CD4-positive, alpha-beta T cell (primary cell): ENCODE measurements at regions of chr18 and their contacts with region 1.

Region 1: DNA sequence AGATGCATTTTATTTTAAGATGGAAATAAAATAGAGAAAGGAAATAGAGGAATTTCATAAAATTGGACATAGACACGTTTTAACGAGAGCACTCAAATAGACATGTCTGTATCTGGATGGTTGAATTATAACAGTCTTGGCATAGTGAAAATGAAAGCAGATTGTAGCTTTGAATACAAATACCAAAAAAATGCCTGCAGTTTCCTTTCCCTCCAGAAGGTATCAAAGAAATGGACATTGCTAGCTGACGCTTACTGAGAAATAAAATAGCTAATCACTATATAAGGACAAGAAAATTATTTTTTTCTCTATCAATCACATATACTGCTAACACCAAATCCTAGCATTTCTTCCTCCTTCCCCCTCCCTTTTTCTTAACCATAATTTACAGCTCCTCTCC is 11.4 kb upstream of the MAPRE2 start:
- DNase-seq: peak in 3 of 14 experiments; percentile 65 to 80 (median 66)
- ATAC-seq: peak; percentile 39
- H3K4me3 ChIP-seq: peak overlapping the region; percentile 51
- H3K4me3 Mint-ChIP-seq: peak overlapping the region; percentile 82
- H3K27ac ChIP-seq: peak overlapping the region; percentile 80 to 89
- H3K27ac Mint-ChIP-seq: peak overlapping the region; percentile 98
- H3K4me1 ChIP-seq: peaks cover 34% of the 10 kb centered on the region
- H3K4me1 Mint-ChIP-seq: peaks cover 70% of the 10 kb centered on the region
- H3K27me3 ChIP-seq: no peaks in the 10 kb centered on the region
- H3K27me3 Mint-ChIP-seq: no peaks in the 10 kb centered on the region
- CTCF ChIP-seq: peak; percentile 16

Region 2: GRCh38 chr18:34976899-34977837 is 52.6 kb before region 1 on chr18:
- CTCF ChIA-PET with region 1: no interaction called
- POLR2A ChIA-PET with region 1: interaction called, 10 read pairs
- intact Hi-C with region 1: no loop called
- DNase-seq: peak; percentile 49 to 87 (median 75)
- ATAC-seq: peak; percentile 74
- H3K4me3 ChIP-seq: peak overlapping the region; percentile 97
- H3K4me3 Mint-ChIP-seq: peak overlapping the region; percentile 95
- H3K27ac ChIP-seq: no peak overlapping the region
- H3K27ac Mint-ChIP-seq: peak overlapping the region; percentile 39
- H3K4me1 ChIP-seq: peaks cover 35% of the 10 kb centered on the region
- H3K4me1 Mint-ChIP-seq: peaks cover 18% of the 10 kb centered on the region
- H3K27me3 ChIP-seq: peaks cover 0 to 5% of the 10 kb centered on the region in 2 experiments
- H3K27me3 Mint-ChIP-seq: peaks cover 9% of the 10 kb centered on the region
- CTCF ChIP-seq: no peak

Region 3: DNA sequence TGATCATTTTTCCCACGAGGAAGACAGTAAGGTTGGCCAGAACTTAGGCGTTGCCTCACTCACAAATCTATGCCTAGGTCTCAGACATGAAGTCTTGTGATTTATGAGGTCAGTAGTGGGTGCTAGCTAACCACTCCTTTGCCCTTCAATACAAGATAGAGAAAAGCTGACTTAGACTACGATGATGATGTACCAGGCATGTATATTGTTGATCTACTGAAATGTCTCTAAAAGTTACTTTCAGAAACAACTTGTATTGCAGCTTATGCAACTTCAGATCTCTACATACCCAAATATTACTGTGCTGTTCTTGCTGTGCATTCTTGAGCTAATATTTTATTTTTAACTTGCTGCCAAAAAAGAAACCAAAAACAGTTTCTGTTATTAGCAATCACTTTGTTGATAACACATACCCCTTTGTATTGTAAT is 42.1 kb after region 1 on chr18:
- CTCF ChIA-PET with region 1: interaction called, 8 read pairs
- POLR2A ChIA-PET with region 1: interaction called, 14 read pairs
- intact Hi-C with region 1: loop called in 1 of 2 experiments (anchors 5 kb)
- DNase-seq: no peak
- ATAC-seq: no peak
- H3K4me3 ChIP-seq: no peak overlapping the region
- H3K4me3 Mint-ChIP-seq: no peak overlapping the region
- H3K27ac ChIP-seq: no peak overlapping the region
- H3K27ac Mint-ChIP-seq: peak overlapping the region; percentile 49
- H3K4me1 ChIP-seq: no peaks in the 10 kb centered on the region
- H3K4me1 Mint-ChIP-seq: peaks cover 82% of the 10 kb centered on the region
- H3K27me3 ChIP-seq: no peaks in the 10 kb centered on the region
- H3K27me3 Mint-ChIP-seq: no peaks in the 10 kb centered on the region
- CTCF ChIP-seq: no peak

Region 4: DNA sequence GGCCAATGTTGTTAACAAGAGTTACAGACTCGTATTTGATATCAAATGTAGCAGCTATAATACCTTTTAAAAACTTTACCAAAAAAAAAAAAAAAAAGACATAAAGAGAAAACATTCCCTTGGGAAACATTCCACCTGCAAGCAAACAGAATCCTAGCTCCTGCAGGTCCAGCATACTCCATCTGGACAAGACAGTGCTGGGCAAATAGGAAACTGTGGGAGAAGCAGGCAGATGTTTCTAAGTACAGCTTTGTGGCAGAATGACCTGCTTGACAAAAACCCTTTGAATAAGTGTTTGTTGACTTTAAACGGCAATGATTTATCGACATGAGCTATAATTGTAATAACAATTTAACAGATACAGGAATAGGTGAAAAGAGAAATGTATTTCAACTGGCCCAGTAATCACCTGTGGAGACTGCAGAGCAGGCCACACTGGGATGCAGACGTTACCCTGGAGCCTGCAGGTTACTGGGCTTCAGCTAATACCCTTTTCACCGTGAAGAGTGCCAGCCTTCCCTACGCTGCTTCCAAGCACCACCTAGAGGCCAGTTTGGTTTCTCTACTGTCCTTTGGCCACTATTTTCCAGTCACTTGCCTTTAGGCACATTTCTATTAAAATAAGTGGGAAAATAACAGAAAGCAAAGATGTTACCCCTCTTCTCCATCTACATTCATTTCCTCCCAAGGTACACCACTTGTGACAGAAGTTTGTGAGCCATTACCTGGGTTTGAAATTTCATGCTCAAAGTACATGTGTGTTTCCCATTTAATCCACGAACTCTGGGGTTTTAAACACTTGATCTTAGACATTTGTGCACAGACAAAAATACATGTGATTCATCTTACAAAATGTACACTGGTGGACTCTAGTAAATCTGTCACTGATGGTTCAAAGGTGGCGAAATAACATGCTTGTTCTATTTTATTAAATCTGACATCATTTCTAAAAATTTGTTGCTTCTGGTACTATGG is 114.1 kb after region 1 on chr18:
- CTCF ChIA-PET with region 1: interaction called, 11 read pairs
- POLR2A ChIA-PET with region 1: interaction called, 18 read pairs
- intact Hi-C with region 1: loop called (anchors 1 to 2 kb)
- DNase-seq: peak in 12 of 14 experiments; percentile 10 to 61 (median 26)
- ATAC-seq: peak; percentile 74
- H3K4me3 ChIP-seq: no peak overlapping the region
- H3K4me3 Mint-ChIP-seq: no peak overlapping the region
- H3K27ac ChIP-seq: no peak overlapping the region
- H3K27ac Mint-ChIP-seq: no peak overlapping the region
- H3K4me1 ChIP-seq: no peaks in the 10 kb centered on the region
- H3K4me1 Mint-ChIP-seq: no peaks in the 10 kb centered on the region
- H3K27me3 ChIP-seq: no peaks in the 10 kb centered on the region
- H3K27me3 Mint-ChIP-seq: no peaks in the 10 kb centered on the region
- CTCF ChIP-seq: peak; percentile 61

Region 5: DNA sequence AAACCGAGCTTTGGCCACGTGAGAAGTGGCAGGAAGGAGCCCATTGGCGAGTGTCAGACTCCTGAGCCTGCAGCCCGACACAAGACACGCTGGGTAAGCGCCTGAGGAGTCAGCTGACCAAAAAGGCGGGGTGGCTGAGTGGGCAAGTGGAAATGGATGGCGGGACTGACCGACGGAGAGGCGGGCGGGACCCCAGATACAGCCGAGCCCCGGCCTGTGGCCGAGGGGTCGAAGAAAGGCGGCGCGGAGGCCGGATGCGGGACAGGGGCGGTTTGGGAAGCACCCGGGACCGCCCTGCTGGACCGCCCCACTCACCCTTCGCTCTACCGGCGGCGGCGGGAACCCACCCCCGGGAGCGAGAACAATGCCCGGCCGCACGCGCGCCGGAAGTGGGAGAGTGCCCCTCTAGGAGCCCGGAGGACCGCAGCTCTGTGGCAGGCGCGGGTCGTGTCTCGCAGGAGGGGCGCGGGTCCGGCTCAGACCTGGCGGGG is 237.4 kb after region 1 on chr18:
- CTCF ChIA-PET with region 1: no interaction called
- POLR2A ChIA-PET with region 1: interaction called, 11 read pairs
- intact Hi-C with region 1: no loop called
- DNase-seq: peak; percentile 40 to 85 (median 66)
- ATAC-seq: peak; percentile 76
- H3K4me3 ChIP-seq: peak overlapping the region; percentile 76
- H3K4me3 Mint-ChIP-seq: peak overlapping the region; percentile 96
- H3K27ac ChIP-seq: peak overlapping the region; percentile 69 to 75
- H3K27ac Mint-ChIP-seq: peak overlapping the region; percentile 92
- H3K4me1 ChIP-seq: peaks cover 18% of the 10 kb centered on the region
- H3K4me1 Mint-ChIP-seq: peaks cover 28% of the 10 kb centered on the region
- H3K27me3 ChIP-seq: no peaks in the 10 kb centered on the region
- H3K27me3 Mint-ChIP-seq: no peaks in the 10 kb centered on the region
- CTCF ChIP-seq: no peak

Region 6: DNA sequence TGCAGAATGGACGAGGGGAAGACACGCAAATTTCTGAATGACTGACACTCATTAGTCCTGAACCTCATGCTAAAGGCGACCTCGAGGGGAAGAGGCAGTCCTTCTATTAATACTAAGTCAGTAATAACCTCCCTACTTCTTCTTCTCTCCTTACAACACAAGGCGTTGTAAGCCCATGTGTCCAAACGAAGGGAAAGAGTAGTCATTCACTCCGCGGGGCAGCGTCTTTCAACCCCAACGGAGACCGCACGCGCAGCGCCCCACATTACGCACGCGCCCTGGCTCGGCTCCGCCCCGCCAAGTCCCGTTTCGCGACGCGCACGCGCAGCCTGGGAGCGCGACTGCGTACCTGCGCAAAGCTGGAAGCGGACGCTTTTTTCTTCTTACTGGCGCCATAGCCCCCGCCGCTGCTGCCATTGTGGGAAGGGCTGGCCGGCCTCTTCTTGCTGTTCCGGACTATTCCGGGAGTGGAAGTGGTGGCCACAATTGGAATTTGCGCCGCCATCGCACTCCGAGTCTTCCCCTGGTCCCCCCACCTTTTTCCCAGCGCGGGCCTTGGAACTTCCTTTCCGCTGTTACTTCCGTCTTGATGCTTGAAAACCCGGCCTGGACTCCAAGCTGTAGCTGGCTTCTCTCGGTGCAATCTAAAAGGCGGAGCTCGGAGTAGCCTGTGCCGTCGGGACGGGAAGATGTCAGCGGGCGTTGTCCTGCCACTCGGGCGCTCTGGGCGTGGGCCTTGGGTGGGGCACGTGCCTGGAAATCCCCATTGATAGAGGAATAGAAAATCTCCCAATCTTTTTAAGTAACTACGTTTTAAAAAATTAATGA is 467.8 kb after region 1 on chr18 and contains the start of gene INO80C:
- CTCF ChIA-PET with region 1: no interaction called
- POLR2A ChIA-PET with region 1: interaction called, 7 read pairs
- intact Hi-C with region 1: loop called in 1 of 2 experiments (anchors 10 kb)
- DNase-seq: peak; percentile 83 to 98 (median 90)
- ATAC-seq: peak; percentile 88
- H3K4me3 ChIP-seq: peak within 1 kb of the TSS; percentile 85
- H3K4me3 Mint-ChIP-seq: peak within 1 kb of the TSS; percentile 98
- H3K27ac ChIP-seq: peak within 1 kb of the TSS; percentile 95 to 98
- H3K27ac Mint-ChIP-seq: peak within 1 kb of the TSS; percentile 99
- H3K4me1 ChIP-seq: peaks cover 17% of the 10 kb centered on the region
- H3K4me1 Mint-ChIP-seq: peaks cover 43% of the 10 kb centered on the region
- H3K27me3 ChIP-seq: no peaks in the 10 kb centered on the region
- H3K27me3 Mint-ChIP-seq: no peaks in the 10 kb centered on the region
- CTCF ChIP-seq: no peak
- total RNA-seq, gene INO80C: 13.0 to 16.0 TPM